Activated B cell treated with CpG ODN at 0.5 μM for 24 hours (primary cell): ENCODE measurements at regions of chr16 and their contacts with region 1.

Region 1: GRCh38 chr16:77207030-77207429 is 7.8 kb downstream of the SYCE1L start:
- DNase-seq: no peak
- ATAC-seq: no peak
- H3K4me3 Mint-ChIP-seq: no peak overlapping the region
- H3K27ac Mint-ChIP-seq: no peak overlapping the region
- H3K4me1 Mint-ChIP-seq: peaks cover 6% of the 10 kb centered on the region
- H3K27me3 Mint-ChIP-seq: no peaks in the 10 kb centered on the region
- CTCF ChIP-seq: no peak

Region 2: GRCh38 chr16:77385483-77385882 is 178.5 kb after region 1 on chr16:
- CTCF ChIA-PET with region 1: no interaction called
- POLR2A ChIA-PET with region 1: interaction called, 10 read pairs
- intact Hi-C with region 1: no loop called
- DNase-seq: no peak
- ATAC-seq: no peak
- H3K4me3 Mint-ChIP-seq: no peak overlapping the region
- H3K27ac Mint-ChIP-seq: no peak overlapping the region
- H3K4me1 Mint-ChIP-seq: no peaks in the 10 kb centered on the region
- H3K27me3 Mint-ChIP-seq: peaks cover 4% of the 10 kb centered on the region
- CTCF ChIP-seq: no peak